ENCODE measurements at regions of chr20 and their contacts with region 1.

Region 1: DNA sequence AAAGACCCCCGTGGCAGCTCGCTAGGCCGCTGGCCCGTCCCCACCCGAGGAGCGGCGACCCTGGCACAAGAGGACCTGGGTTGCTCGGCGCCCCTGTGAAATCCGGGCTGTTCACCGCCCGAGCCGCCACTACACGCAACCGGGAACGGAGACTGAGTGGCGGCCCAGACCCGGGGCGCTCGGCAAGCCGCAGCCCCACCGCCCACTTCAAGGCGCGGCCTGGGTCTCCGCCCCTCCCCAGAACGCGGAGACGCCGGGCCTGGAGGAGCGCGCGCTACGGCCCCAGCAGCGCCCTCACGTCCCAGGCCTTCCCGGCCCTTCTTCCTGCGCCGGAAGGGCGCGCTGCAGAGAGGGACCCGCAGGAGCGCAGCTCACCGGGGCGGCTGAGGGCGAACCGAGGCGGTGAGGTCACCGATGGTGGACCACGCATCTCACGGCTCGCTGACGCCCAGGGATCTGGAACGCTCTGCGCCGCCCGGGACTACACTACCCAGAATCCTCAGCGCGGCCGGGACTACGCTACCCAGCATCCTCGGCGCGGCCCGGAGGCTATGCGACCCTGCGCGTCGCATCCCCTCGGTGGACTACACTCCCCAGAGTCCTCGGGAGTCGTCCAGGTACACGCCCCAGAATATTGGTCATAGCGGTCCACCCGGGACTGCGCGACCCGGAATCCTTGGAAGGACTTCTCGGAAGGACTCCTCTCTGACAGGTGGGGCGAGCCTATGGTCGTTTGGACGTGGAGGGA is at the start of gene ZNF337:
- DNase-seq: peak; percentile 91
- H3K4me3 ChIP-seq: peak within 1 kb of the TSS; percentile 85 to 88
- H3K27ac ChIP-seq: peak within 1 kb of the TSS; percentile 88 to 92
- H3K4me1 ChIP-seq: no peaks in the 10 kb centered on the region
- H3K27me3 ChIP-seq: no peaks in the 10 kb centered on the region
- CTCF ChIP-seq: peak in 2 of 4 experiments; percentile 13 to 23
- POLR2A ChIP-seq: peak; percentile 69
- total RNA-seq, gene ZNF337: 16.0 to 20.3 TPM

Region 2: GRCh38 chr20:25407311-25408169 is 289.0 kb before region 1 on chr20 and contains the start of gene GINS1:
- intact Hi-C with region 1: no loop called
- DNase-seq: peak; percentile 71
- H3K4me3 ChIP-seq: peak within 1 kb of the TSS; percentile 42 to 46
- H3K27ac ChIP-seq: peak within 1 kb of the TSS; percentile 7 to 52
- H3K4me1 ChIP-seq: peaks cover 3% of the 10 kb centered on the region
- H3K27me3 ChIP-seq: no peaks in the 10 kb centered on the region
- CTCF ChIP-seq: no peak
- POLR2A ChIP-seq: no peak
- total RNA-seq, gene GINS1: 2.2 to 6.0 TPM

Region 3: DNA sequence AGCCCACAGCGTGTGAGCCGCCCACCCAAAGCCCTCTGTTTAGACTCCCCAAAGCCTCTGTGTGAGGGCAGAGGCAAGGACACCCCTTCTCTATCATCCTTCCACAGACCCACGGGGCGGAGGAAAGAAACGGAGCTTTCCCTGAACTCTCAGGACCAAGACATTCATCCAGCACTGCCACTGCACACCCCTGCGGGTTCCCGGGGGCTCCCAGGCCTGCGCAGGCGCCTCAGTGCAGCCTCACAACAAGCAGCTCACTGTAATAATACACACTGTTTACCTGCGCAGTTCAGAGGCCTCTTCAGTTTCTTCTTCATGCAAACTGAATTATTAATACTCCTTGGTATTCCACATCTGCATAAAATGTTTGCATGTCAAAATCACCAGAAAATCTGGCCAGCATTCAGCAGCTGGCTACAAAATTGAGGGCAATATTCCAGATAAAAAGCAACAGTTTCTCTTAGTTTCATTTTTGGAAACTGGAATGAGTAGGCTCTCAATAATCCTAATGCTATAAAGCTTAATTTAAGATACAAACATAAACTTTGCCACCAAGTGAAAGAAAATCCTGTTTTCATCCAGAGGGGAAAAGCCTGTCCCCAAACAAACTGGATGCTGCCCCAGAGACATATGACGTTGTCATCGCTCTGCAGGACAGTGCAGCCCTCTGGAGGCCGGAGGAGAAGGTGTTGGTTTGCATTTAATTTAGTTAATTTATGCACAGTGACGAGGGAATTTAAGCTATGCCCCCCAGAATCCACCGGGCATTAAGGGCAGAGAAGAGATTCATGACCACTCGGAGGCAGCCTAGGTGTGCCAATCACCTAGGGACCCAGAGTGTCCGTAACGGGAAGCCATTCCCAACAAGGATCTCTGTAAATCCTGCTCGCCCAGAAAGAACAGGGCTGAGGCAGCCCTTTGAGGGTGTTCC is 156.6 kb before region 1 on chr20:
- intact Hi-C with region 1: loop called (anchors 10 kb)
- DNase-seq: no peak
- H3K4me3 ChIP-seq: peak overlapping the region; percentile 21 to 25
- H3K27ac ChIP-seq: peak overlapping the region; percentile 61 to 62
- H3K4me1 ChIP-seq: no peaks in the 10 kb centered on the region
- H3K27me3 ChIP-seq: no peaks in the 10 kb centered on the region
- CTCF ChIP-seq: peak; percentile 9 to 57 (median 48)
- POLR2A ChIP-seq: no peak

Region 4: GRCh38 chr20:25623736-25624499 is 72.6 kb before region 1 on chr20 and contains the start of gene NANP:
- intact Hi-C with region 1: loop called (anchors 2 kb)
- DNase-seq: peak; percentile 95
- H3K4me3 ChIP-seq: peak within 1 kb of the TSS; percentile 62 to 86
- H3K27ac ChIP-seq: peak within 1 kb of the TSS; percentile 84 to 94
- H3K4me1 ChIP-seq: no peaks in the 10 kb centered on the region
- H3K27me3 ChIP-seq: no peaks in the 10 kb centered on the region
- CTCF ChIP-seq: no peak
- POLR2A ChIP-seq: peak; percentile 70
- total RNA-seq, gene NANP: 4.0 to 5.3 TPM

Region 5: GRCh38 chr20:25685276-25686080 is 11.1 kb before region 1 on chr20:
- intact Hi-C with region 1: no loop called
- DNase-seq: no peak
- H3K4me3 ChIP-seq: no peak overlapping the region
- H3K27ac ChIP-seq: no peak overlapping the region
- H3K4me1 ChIP-seq: no peaks in the 10 kb centered on the region
- H3K27me3 ChIP-seq: no peaks in the 10 kb centered on the region
- CTCF ChIP-seq: no peak
- POLR2A ChIP-seq: no peak